ENCODE measurements at regions of chr3 and their contacts with region 1.

Region 1: GRCh38 chr3:23314981-23315762 is 112.0 kb downstream of the UBE2E2 start:
- DNase-seq: peak; percentile 20
- ATAC-seq: no peak
- H3K4me3 ChIP-seq: no peak overlapping the region
- H3K27ac ChIP-seq: no peak overlapping the region
- H3K4me1 ChIP-seq: peaks cover 1% of the 10 kb centered on the region; the same call in 1 of the 2 replicates
- H3K27me3 ChIP-seq: no peaks in the 10 kb centered on the region; the same call in 1 of the 2 replicates
- CTCF ChIP-seq: no peak
- POLR2A ChIP-seq: no peak
- RAD21 ChIP-seq: no peak

Region 2: DNA sequence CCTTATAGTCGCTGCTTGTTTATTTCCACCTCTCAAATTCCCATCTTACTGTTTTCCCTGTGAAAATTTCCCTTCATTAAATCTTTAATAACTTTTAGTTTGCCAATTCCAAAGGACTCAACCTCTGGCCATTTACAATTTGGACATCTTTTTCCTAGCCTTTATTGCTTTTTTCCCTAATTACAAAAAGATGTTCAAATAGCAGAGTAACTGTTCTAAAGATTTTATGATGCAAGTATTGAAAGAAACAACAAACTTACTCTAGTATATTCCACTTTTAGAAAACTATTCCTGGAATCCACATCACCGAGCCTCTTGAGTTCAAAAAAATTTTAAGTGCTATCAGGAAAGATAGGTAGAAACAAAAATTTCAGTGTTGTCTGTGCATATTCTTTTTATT is 286.2 kb before region 1 on chr3:
- CTCF ChIA-PET with region 1: no interaction called
- POLR2A ChIA-PET with region 1: no interaction called
- dilution Hi-C with region 1: no loop called
- in situ Hi-C with region 1: no loop called
- intact Hi-C with region 1: no loop called
- DNase-seq: no peak
- ATAC-seq: no peak
- H3K4me3 ChIP-seq: no peak overlapping the region
- H3K27ac ChIP-seq: no peak overlapping the region
- H3K4me1 ChIP-seq: no peaks in the 10 kb centered on the region
- H3K27me3 ChIP-seq: peaks cover 2% of the 10 kb centered on the region; the same call in 1 of the 2 replicates
- CTCF ChIP-seq: no peak
- POLR2A ChIP-seq: no peak
- RAD21 ChIP-seq: no peak

Region 3: GRCh38 chr3:23294770-23295387 is 20.3 kb before region 1 on chr3:
- CTCF ChIA-PET with region 1: no interaction called
- POLR2A ChIA-PET with region 1: no interaction called
- dilution Hi-C with region 1: no loop called
- in situ Hi-C with region 1: no loop called
- intact Hi-C with region 1: loop called (anchors 2 kb)
- DNase-seq: no peak
- ATAC-seq: no peak
- H3K4me3 ChIP-seq: no peak overlapping the region
- H3K27ac ChIP-seq: no peak overlapping the region
- H3K4me1 ChIP-seq: no peaks in the 10 kb centered on the region
- H3K27me3 ChIP-seq: no peaks in the 10 kb centered on the region
- CTCF ChIP-seq: no peak
- POLR2A ChIP-seq: no peak
- RAD21 ChIP-seq: no peak

Region 4: DNA sequence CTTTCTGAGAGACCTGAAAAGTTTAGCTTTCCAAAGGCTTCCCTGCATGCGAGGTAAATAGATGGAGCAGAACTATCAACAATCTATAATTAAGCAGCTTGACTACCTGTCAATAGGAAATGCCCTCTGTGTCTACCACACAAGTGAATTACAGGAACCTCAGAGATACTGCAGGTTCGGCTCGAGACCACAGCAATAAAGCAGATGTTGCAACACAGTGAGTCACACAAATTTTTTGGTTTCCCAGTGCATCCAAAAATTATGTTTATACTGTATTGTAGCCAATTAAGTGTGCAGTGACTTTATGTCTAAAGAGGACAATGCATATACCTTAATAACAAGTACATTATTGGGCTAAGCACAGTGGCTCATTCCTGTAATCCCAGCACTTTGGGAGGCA is 139.9 kb after region 1 on chr3:
- CTCF ChIA-PET with region 1: no interaction called
- POLR2A ChIA-PET with region 1: interaction called, 17 read pairs
- dilution Hi-C with region 1: no loop called
- in situ Hi-C with region 1: no loop called
- intact Hi-C with region 1: no loop called
- DNase-seq: peak; percentile 89
- ATAC-seq: peak; percentile 72
- H3K4me3 ChIP-seq: no peak overlapping the region
- H3K27ac ChIP-seq: no peak overlapping the region
- H3K4me1 ChIP-seq: peaks cover 4% of the 10 kb centered on the region
- H3K27me3 ChIP-seq: no peaks in the 10 kb centered on the region
- CTCF ChIP-seq: no peak
- POLR2A ChIP-seq: no peak
- RAD21 ChIP-seq: no peak

Measured in IMR-90 (cell line).